Endothelial cell of umbilical vein (primary cell): ENCODE measurements at regions of chr6 and their contacts with region 1.

Region 1: DNA sequence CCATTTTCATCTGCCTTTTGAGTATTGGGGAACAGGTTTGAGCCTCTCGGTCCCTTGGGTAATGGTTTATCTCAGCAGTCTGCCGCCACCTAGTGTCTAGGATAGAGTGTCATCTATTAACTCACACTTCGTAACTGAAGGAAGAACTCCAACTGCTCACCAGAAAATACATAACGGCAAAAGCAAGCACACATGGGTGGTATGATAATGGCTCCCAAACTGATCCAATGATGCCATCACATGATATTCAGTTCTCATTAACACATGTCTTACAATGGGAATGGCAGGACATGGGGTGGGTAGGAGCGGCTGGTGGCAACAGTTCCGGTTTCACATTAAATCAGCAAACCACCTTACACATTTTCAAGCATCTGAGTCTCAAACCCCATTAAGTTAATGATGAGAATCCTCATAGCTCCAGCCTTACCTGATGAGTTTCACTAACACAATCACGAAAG is 110.7 kb upstream of the PHACTR1 start:
- DNase-seq: peak; percentile 81
- H3K4me3 ChIP-seq: no peak overlapping the region
- H3K27ac ChIP-seq: no peak overlapping the region
- H3K4me1 ChIP-seq: peaks cover 42% of the 10 kb centered on the region
- H3K27me3 ChIP-seq: no peaks in the 10 kb centered on the region
- CTCF ChIP-seq: peak; percentile 58 to 61
- POLR2A ChIP-seq: no peak

Region 2: DNA sequence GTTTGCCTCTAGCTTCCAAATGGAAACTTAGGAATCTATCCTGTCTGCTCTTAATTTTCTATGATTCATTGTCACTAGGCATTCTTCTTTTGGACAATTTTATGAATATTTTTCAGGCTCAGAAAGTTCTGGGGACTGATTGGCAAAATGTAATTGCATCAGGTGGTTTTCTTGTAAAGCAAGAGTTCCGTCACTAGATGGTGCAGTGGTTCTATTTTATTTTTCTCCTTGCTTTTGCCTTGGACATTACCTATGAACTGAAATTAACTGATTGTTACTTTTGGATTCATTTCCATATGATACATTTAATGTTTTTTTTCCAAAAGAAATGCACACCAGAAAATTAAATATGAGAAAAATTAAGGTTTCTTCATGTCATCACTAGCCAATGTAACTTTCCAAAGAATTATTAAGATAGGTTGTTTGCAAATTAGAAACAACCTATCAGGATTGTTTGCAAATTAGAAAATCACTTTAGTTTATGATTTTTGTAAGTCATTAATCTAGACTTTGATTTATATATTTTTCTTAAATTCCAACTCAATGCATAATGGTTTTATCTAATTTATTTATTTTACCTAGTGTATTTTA is 1020.4 kb before region 1 on chr6:
- CTCF ChIA-PET with region 1: interaction called, 3 read pairs
- POLR2A ChIA-PET with region 1: no interaction called
- dilution Hi-C with region 1: no loop called
- intact Hi-C with region 1: loop called (anchors 1 kb)
- DNase-seq: peak; percentile 83
- H3K4me3 ChIP-seq: no peak overlapping the region
- H3K27ac ChIP-seq: peak overlapping the region; percentile 79
- H3K4me1 ChIP-seq: peaks cover 29% of the 10 kb centered on the region
- H3K27me3 ChIP-seq: no peaks in the 10 kb centered on the region
- CTCF ChIP-seq: peak; percentile 41 to 42
- POLR2A ChIP-seq: no peak

Region 3: DNA sequence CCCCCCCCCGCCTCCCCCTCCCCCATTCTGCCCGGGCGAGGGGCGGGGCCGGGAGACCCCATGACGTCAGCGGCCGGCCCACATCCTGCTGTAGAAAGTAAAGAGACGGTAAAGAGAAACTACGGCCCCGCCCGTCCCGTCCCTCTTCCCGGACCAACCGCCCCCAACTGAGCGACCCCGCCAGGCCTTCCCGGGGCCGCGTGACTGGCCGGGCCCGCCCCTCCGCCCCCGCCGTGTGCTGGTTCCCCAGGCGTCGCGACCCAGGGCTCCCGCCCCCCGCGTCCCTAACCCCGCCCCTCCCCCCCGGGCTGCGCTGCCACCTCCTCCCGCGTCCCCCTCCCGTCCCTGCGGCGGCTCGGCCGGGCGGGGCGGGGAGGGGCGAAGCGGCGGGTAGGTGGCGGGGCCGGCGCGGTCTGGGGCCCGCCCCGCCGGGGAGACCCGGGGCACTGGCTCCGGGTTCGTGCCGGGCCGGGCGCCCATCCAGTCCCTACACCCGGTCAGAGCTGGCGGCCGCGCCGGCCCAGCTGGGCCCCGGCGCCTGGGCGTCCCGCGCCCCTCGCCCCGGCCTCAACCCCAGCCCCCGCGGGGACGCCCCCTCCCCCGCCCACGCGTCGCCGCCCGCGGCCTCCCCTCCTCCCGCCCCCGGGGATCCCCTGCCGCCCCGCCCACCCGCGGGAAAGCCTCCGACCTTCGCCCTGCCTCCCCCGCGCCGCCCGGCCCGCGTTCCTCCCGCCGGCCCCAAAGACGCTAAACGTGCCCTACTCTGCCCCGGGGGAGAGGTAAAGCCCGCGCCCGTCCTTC is 594.4 kb before region 1 on chr6:
- CTCF ChIA-PET with region 1: no interaction called
- POLR2A ChIA-PET with region 1: no interaction called
- dilution Hi-C with region 1: no loop called
- intact Hi-C with region 1: loop called (anchors 5 kb)
- DNase-seq: peak; percentile 96
- H3K4me3 ChIP-seq: peak overlapping the region in 1 of 3 experiments; percentile 71
- H3K27ac ChIP-seq: peak overlapping the region; percentile 98
- H3K4me1 ChIP-seq: peaks cover 38% of the 10 kb centered on the region
- H3K27me3 ChIP-seq: no peaks in the 10 kb centered on the region
- CTCF ChIP-seq: no peak
- POLR2A ChIP-seq: peak; percentile 7

Region 4: DNA sequence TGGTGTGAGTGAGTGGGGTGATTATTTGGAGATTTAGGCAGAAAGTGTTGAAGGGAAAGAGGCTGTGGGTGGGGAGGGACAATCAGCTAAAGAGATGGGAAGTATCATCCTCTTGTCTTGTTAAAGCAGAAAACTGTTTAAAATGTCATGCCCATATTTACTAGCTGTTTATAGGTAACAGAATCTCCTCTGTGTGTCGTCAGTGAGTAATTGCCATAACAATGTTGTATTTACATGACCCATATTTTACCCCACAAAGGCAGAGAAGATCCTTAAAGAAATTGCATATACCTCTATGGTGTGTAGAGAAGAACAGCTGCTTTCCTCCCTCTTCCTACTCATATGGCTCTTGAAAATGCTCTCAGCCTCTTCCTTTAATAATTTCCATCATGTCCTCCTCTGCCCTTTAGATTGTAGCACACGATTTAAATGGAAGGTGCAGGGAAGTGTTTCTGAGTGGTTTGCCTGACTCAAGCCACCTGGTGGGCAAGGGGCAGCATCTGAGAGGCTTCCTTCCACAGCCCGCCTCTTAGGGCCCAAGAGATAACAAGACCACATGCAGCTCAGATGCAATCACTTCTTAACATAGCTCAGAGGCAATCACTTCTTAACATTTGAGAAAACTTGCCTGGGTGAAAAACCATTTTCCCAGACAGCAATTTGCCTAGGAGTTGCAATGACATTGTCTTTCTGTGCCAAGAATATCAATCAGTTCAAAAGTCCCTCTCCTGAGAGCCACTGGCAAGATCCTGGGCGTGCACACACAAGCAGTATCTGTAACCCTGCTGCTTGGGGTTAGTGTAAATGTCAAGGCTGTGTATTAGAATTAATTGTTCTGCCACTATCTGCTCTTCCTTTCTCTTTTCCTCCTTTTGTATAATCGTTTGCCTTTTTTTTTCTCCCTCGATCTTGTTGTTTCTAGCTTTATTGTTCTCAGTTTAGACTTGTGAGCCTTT is 359.9 kb before region 1 on chr6:
- CTCF ChIA-PET with region 1: no interaction called
- POLR2A ChIA-PET with region 1: no interaction called
- dilution Hi-C with region 1: no loop called
- intact Hi-C with region 1: loop called (anchors 1 kb)
- DNase-seq: peak; percentile 89
- H3K4me3 ChIP-seq: no peak overlapping the region
- H3K27ac ChIP-seq: no peak overlapping the region
- H3K4me1 ChIP-seq: peaks cover 16% of the 10 kb centered on the region
- H3K27me3 ChIP-seq: no peaks in the 10 kb centered on the region
- CTCF ChIP-seq: no peak
- POLR2A ChIP-seq: peak; percentile 24

Region 5: GRCh38 chr6:12395898-12396297 is 210.0 kb before region 1 on chr6:
- CTCF ChIA-PET with region 1: interaction called, 29 read pairs
- POLR2A ChIA-PET with region 1: no interaction called
- dilution Hi-C with region 1: no loop called
- intact Hi-C with region 1: loop called (anchors 1 kb)
- DNase-seq: peak; percentile 47
- H3K4me3 ChIP-seq: no peak overlapping the region
- H3K27ac ChIP-seq: no peak overlapping the region
- H3K4me1 ChIP-seq: peaks cover 26% of the 10 kb centered on the region
- H3K27me3 ChIP-seq: no peaks in the 10 kb centered on the region
- CTCF ChIP-seq: no peak
- POLR2A ChIP-seq: no peak

Region 6: DNA sequence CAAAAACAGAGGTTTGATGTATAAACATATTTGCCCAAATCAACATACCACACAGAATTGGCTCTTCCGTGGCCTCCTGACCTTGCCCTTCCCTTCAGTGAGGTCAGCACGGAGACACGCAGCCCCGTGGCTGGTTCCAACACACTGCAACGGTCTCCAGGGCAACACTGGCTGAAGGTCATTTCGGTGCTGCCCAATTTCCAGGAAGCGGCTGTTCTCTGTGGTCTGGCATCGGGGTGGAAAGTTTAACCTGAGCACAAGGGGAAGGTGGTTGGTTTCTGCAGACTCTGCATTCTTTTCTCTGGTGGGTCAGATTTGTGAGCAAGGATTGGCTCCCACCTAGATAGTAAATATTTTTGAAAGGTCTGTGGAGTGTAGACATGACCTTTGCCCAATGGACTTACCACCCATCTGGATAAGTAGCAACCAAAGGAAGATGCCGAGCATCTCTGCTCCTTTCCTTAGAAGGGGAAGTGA is 67.0 kb before region 1 on chr6:
- CTCF ChIA-PET with region 1: interaction called, 11 read pairs
- POLR2A ChIA-PET with region 1: no interaction called
- dilution Hi-C with region 1: no loop called
- intact Hi-C with region 1: loop called (anchors 1 kb)
- DNase-seq: peak; percentile 89
- H3K4me3 ChIP-seq: no peak overlapping the region
- H3K27ac ChIP-seq: peak overlapping the region; percentile 87
- H3K4me1 ChIP-seq: peaks cover 51% of the 10 kb centered on the region
- H3K27me3 ChIP-seq: no peaks in the 10 kb centered on the region
- CTCF ChIP-seq: no peak
- POLR2A ChIP-seq: peak; percentile 38

Region 7: GRCh38 chr6:13466304-13467215 is 860.6 kb after region 1 on chr6:
- CTCF ChIA-PET with region 1: no interaction called
- POLR2A ChIA-PET with region 1: no interaction called
- dilution Hi-C with region 1: no loop called
- intact Hi-C with region 1: no loop called
- DNase-seq: no peak
- H3K4me3 ChIP-seq: no peak overlapping the region
- H3K27ac ChIP-seq: no peak overlapping the region
- H3K4me1 ChIP-seq: no peaks in the 10 kb centered on the region
- H3K27me3 ChIP-seq: no peaks in the 10 kb centered on the region
- CTCF ChIP-seq: no peak
- POLR2A ChIP-seq: no peak